Posterior vena cava (tissue), 2 donors: ENCODE measurements at regions of chr7 and their contacts with region 1.

Region 1: DNA sequence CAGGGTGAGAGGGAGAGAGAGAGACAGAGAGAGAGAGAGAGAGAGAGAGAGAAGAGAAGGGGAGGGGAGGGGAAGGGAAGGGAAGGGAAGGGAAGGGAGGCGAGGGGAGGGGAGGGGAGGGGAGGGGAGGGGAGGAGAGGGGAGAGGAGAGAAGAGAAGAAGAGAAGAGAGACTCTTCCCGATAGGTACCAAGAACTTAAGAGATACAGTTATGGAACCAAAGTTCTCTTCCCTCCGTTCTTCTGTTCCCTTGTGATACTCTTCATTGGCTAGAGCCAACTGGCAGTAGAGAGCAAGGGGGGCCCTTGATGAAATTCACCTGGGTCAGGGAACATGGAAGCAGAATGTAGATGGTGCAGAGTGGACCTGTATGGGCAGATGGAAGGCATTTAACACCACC is 122.1 kb downstream of the PTN start:
- DNase-seq: no peak

Region 2: DNA sequence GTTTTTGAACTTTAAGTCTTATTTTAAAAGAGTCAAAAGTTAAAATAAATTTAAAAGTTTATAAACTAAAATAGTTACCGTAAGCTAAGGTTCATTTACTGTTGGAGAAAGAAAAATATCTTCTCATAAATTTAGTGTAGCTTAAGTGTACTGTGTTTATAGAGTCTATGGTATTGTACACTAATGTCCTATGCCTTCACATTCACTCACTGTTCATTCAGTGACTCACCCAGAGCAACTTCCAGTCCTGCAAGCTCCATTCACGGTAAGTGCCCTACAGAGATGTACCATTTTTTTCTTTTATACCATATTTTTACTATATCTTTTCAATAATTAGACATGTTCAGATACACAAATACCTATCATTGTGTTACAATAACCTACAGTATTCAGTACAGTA is 24.4 kb after region 1 on chr7:
- intact Hi-C with region 1: loop called in 1 of 2 experiments (anchors 2 kb)
- DNase-seq: no peak

Region 3: DNA sequence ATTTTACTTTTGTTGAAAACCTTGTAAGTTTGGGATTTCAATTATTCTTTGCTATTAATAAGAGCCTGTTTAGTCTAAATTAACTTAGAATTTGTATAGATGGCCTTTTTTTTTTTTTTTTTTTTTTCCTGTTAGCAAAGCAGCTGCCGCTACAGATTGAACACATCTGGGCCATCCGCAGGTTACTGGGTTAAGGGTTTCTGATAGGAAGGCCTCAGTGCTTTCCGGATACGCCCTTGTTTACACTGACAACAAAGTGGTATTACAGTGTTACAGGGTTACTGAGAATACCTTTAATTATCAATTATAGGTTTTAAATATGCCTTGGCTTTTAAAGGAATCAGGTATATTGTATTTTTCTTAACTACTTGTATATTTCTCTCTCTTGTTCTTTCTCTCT is 45.3 kb after region 1 on chr7:
- intact Hi-C with region 1: no loop called
- DNase-seq: no peak